Aorta (tissue), 5 donors: ENCODE measurements at regions of chr2 and their contacts with region 1.

Region 1: GRCh38 chr2:200913654-200914053 is 24.5 kb downstream of the NIF3L1 start:
- DNase-seq: no peak
- ATAC-seq: no peak
- H3K4me3 ChIP-seq: no peak overlapping the region
- H3K27ac ChIP-seq: no peak overlapping the region
- H3K4me1 ChIP-seq: no peaks in the 10 kb centered on the region
- H3K27me3 ChIP-seq: no peaks in the 10 kb centered on the region

Region 2: GRCh38 chr2:201057087-201057521 is 143.4 kb after region 1 on chr2:
- intact Hi-C with region 1: loop called in 1 of 2 experiments (anchors 5 kb)
- DNase-seq: no peak
- ATAC-seq: no peak
- H3K4me3 ChIP-seq: no peak overlapping the region
- H3K27ac ChIP-seq: no peak overlapping the region
- H3K4me1 ChIP-seq: peaks cover 0 to 2% of the 10 kb centered on the region in 2 donors
- H3K27me3 ChIP-seq: no peaks in the 10 kb centered on the region